GM13977 (cell line): ENCODE measurements at regions of chr21 and their contacts with region 1.

Region 1: GRCh38 chr21:35400233-35400957 is 351.3 kb upstream of the RUNX1 start:
- DNase-seq: peak; percentile 69
- CTCF ChIP-seq: peak; percentile 74

Region 2: GRCh38 chr21:34745557-34746255 is 654.7 kb before region 1 on chr21:
- in situ Hi-C with region 1: loop called (anchors 25 kb)
- DNase-seq: peak; percentile 70
- CTCF ChIP-seq: peak; percentile 84

Region 3: GRCh38 chr21:35051287-35051818 is 349.0 kb before region 1 on chr21:
- in situ Hi-C with region 1: loop called (anchors 10 kb)
- DNase-seq: peak; percentile 59
- CTCF ChIP-seq: peak; percentile 58

Region 4: GRCh38 chr21:35748678-35749314 is 348.4 kb after region 1 on chr21:
- in situ Hi-C with region 1: no loop called
- DNase-seq: no peak
- CTCF ChIP-seq: no peak

Region 5: GRCh38 chr21:35840197-35840799 is 439.9 kb after region 1 on chr21:
- in situ Hi-C with region 1: loop called (anchors 25 kb)
- DNase-seq: peak; percentile 43
- CTCF ChIP-seq: peak; percentile 73